ENCODE measurements at regions of chr6 and their contacts with region 1.

Region 1: GRCh38 chr6:19873031-19873430 is 35.9 kb downstream of the ID4 start:
- DNase-seq: peak; percentile 49
- ATAC-seq: peak; percentile 87
- H3K4me3 ChIP-seq: no peak overlapping the region
- H3K27ac ChIP-seq: no peak overlapping the region
- H3K4me1 ChIP-seq: no peaks in the 10 kb centered on the region
- H3K27me3 ChIP-seq: no peaks in the 10 kb centered on the region
- CTCF ChIP-seq: peak; percentile 48
- EP300 ChIP-seq: no peak
- POLR2A ChIP-seq: no peak
- RAD21 ChIP-seq: no peak

Region 2: DNA sequence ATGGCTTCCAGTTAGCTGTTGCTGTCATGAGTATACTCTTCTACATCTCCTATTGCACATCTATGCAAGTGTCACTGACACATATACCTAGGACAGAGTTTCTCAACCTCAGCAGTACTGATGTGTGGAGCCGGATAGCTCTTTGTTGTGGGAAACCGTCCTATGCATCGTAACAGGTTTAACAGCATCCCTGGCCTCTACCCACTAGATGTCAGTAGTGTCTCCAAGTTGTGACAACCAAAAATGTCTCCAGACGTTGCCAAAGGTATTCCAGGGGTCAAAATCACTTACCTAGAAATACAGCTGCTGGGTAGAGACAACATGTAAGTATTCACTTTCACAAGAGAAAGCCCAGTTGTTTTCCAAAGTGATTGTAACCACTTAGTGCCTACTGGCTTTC is 848.3 kb before region 1 on chr6:
- CTCF ChIA-PET with region 1: no interaction called
- POLR2A ChIA-PET with region 1: no interaction called
- in situ Hi-C with region 1: no loop called
- intact Hi-C with region 1: loop called (anchors 2 kb)
- DNase-seq: peak; percentile 30
- ATAC-seq: peak; percentile 78
- H3K4me3 ChIP-seq: no peak overlapping the region
- H3K27ac ChIP-seq: no peak overlapping the region
- H3K4me1 ChIP-seq: no peaks in the 10 kb centered on the region
- H3K27me3 ChIP-seq: no peaks in the 10 kb centered on the region
- CTCF ChIP-seq: peak; percentile 59
- EP300 ChIP-seq: no peak
- POLR2A ChIP-seq: no peak
- RAD21 ChIP-seq: no peak

Region 3: DNA sequence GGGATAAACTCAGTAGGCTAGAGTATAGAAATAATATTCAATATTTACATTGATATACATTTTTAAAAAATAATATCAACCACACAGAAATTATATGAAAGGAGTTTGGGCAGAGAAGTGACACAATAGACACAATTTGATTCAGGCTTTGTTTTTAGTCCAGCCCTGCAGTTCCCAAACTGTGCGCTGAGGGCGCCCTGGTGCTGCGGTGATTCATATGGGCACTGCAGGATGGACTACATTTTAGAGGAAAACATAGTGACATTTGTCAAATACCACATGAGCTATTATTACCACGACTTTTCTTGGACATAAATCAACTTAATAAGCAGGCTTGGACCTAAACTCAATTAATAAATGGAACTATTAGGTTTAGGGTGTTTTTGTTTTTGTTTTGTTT is 400.2 kb before region 1 on chr6:
- CTCF ChIA-PET with region 1: no interaction called
- POLR2A ChIA-PET with region 1: no interaction called
- in situ Hi-C with region 1: no loop called
- intact Hi-C with region 1: loop called (anchors 2 kb)
- DNase-seq: no peak
- ATAC-seq: no peak
- H3K4me3 ChIP-seq: no peak overlapping the region
- H3K27ac ChIP-seq: no peak overlapping the region
- H3K4me1 ChIP-seq: no peaks in the 10 kb centered on the region
- H3K27me3 ChIP-seq: no peaks in the 10 kb centered on the region
- CTCF ChIP-seq: 0 out of 2 replicates have a peak, but pooled peaks have one; percentile 27
- EP300 ChIP-seq: no peak
- POLR2A ChIP-seq: no peak
- RAD21 ChIP-seq: no peak

Region 4: DNA sequence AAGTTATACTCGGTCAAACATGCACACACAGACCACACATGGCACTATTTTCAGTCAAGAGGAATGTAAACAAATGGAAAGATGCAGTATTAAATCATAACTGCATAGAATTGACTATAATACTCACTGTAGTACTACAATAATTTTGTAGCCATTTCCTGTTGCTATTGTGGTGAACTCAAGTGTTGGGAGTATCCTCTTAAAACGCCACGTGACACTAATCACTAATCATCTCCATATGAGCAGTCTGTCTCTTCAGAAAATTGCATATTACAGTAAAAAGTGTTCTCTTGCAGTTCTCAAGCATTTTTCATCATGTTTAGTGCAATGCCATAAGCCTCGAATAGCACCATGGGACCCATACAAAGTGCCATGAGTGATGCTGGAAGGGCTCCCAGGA is 294.6 kb before region 1 on chr6:
- CTCF ChIA-PET with region 1: no interaction called
- POLR2A ChIA-PET with region 1: no interaction called
- in situ Hi-C with region 1: no loop called
- intact Hi-C with region 1: no loop called
- DNase-seq: no peak
- ATAC-seq: no peak
- H3K4me3 ChIP-seq: no peak overlapping the region
- H3K27ac ChIP-seq: no peak overlapping the region
- H3K4me1 ChIP-seq: no peaks in the 10 kb centered on the region
- H3K27me3 ChIP-seq: no peaks in the 10 kb centered on the region
- CTCF ChIP-seq: no peak
- EP300 ChIP-seq: no peak
- POLR2A ChIP-seq: no peak
- RAD21 ChIP-seq: no peak